ENCODE measurements at regions of chr3 and their contacts with region 1.

Region 1: DNA sequence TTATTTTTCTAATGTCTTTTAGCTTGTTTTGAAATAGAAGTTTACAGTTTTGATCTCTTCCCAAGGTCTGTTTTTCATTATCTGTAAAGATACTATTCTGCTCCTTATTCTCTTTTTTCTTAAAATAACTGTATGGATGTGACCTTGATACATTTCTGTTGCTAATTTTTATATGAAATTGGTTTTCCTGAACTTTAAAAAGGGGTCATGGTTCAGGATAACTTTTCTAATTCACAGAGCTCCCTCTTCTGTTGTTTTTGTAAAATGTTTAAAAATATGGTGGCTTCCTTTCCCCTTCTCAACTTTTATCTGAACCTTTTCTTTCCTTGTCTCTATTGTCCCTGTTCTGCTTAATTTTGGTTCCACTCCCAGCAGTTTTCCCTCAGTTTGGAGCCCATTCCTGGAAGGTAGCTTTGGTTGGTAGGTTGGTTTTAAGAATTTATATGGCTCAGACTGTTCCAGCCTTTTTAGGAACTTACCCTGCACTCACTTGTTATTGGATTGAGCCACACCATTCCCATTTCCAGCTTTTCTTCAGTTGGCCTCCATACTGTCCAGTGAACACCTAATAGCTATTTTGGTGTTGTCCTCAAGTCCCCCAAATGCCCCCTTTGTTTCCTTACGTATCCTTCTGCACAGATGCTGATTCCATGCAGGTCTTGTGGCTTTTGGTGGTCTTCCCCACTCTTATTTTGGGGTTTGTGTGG is 70.3 kb downstream of the SLMAP start:
- DNase-seq: no peak
- ATAC-seq: no peak
- H3K4me3 ChIP-seq: no peak overlapping the region
- H3K27ac ChIP-seq: no peak overlapping the region
- H3K4me1 ChIP-seq: no peaks in the 10 kb centered on the region; the same call in 1 of the 2 replicates
- H3K27me3 ChIP-seq: no peaks in the 10 kb centered on the region
- CTCF ChIP-seq: peak in 1 of 3 experiments; percentile 45; a peak in 2 of 6 replicates
- EP300 ChIP-seq: no peak
- POLR2A ChIP-seq: no peak
- RAD21 ChIP-seq: peak; percentile 63

Region 2: GRCh38 chr3:57169872-57170623 is 656.4 kb before region 1 on chr3:
- CTCF ChIA-PET with region 1: interaction called, 8 read pairs
- POLR2A ChIA-PET with region 1: interaction called, 3 read pairs
- RAD21 ChIA-PET with region 1: no interaction called
- SMC1A ChIA-PET with region 1: interaction called, 11 read pairs
- in situ Hi-C with region 1: no loop called
- intact Hi-C with region 1: no loop called
- DNase-seq: no peak
- ATAC-seq: peak; percentile 91
- H3K4me3 ChIP-seq: peak overlapping the region; percentile 75
- H3K27ac ChIP-seq: no peak overlapping the region; the same call in 1 of the 2 replicates
- H3K4me1 ChIP-seq: 0 out of 2 replicates have a peak, but pooled peaks cover 4% of the 10 kb centered on the region
- H3K27me3 ChIP-seq: peaks cover 0 to 4% of the 10 kb centered on the region in 2 experiments; a peak in 2 of 4 replicates
- CTCF ChIP-seq: peak; percentile 78 to 88 (median 84)
- EP300 ChIP-seq: 0 out of 4 replicates have a peak, but pooled peaks of 1 of the 2 experiments have one; percentile 25
- POLR2A ChIP-seq: no peak
- RAD21 ChIP-seq: peak; percentile 79

Region 3: DNA sequence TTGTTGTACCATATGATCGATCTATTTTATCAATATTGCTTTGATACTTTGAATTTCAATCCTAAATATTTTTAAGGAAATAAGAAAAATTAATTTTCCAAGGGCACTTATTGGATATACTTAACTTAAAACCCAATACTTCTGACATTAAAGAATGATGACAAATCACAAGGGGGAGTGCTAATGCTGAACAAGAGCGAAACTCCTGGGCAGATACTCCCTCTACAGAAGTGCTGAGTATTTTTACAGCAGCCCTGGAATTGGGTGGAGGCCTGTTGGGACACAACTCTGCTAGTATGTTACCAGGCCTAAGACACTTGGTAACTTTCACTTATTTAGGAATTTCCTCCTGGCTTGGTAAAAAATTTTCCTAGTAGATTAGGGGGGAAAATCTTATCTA is 179.7 kb before region 1 on chr3:
- CTCF ChIA-PET with region 1: interaction called, 6 read pairs
- POLR2A ChIA-PET with region 1: no interaction called
- RAD21 ChIA-PET with region 1: no interaction called
- SMC1A ChIA-PET with region 1: interaction called, 7 read pairs
- in situ Hi-C with region 1: no loop called
- intact Hi-C with region 1: loop called (anchors 10 kb)
- DNase-seq: no peak
- ATAC-seq: peak; percentile 41; the same call in 2 of the 3 replicates
- H3K4me3 ChIP-seq: no peak overlapping the region
- H3K27ac ChIP-seq: no peak overlapping the region
- H3K4me1 ChIP-seq: no peaks in the 10 kb centered on the region
- H3K27me3 ChIP-seq: no peaks in the 10 kb centered on the region
- CTCF ChIP-seq: peak in 1 of 3 experiments; percentile 42; a peak in 2 of 6 replicates
- EP300 ChIP-seq: no peak
- POLR2A ChIP-seq: no peak
- RAD21 ChIP-seq: peak; percentile 47

Region 4: DNA sequence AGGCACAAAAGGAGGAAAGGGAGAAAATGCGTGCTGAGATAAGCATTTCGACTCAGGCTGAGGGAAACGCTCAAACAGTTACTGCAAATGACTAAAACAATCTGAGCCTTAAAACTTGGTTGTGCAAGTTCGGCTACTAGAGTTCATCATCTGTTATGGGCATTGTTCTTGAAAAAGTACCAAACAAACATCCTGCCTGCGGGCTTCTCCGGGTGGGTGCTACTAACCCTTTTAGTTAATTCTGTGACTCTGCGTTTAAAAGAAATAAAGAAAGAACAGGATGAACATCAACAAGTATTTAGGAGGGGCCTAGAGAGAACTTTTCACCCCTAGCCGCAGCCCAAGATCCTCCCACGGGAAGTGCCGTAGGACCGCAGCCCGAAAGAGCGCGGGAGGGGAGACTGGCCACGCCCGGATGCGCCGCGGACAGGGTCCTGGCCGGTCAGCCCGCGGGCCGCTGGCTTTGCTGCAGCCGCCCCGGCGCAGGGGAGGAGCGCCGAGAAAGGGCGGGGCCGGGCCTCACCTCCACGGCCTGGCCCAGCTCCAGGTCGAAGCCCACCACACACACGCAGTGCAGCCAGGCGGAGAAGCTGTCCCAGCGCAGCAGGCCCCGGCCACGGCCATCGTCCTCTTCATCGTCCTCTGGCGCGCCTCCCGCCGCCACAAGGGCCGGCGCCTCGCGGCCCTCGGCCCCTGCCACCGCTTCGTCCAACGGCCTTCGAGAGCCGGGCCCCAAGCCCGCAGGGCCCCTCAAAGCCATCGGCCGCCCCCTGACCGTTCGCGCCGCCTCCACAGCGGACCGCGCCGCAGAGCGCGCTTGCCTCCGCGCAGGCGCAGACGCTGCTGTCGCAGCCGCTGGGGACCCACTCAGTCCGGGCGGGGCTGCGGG is 133.9 kb before region 1 on chr3 and contains the start of gene DENND6A:
- CTCF ChIA-PET with region 1: interaction called, 6 read pairs
- POLR2A ChIA-PET with region 1: no interaction called
- RAD21 ChIA-PET with region 1: interaction called, 4 read pairs
- SMC1A ChIA-PET with region 1: interaction called, 18 read pairs
- in situ Hi-C with region 1: no loop called
- intact Hi-C with region 1: no loop called
- DNase-seq: peak; percentile 69
- ATAC-seq: peak; percentile 91
- H3K4me3 ChIP-seq: peak within 1 kb of the TSS; percentile 72
- H3K27ac ChIP-seq: peak within 1 kb of the TSS; percentile 88
- H3K4me1 ChIP-seq: peaks cover 15% of the 10 kb centered on the region; the same call in 1 of the 2 replicates
- H3K27me3 ChIP-seq: no peaks in the 10 kb centered on the region
- CTCF ChIP-seq: no peak
- EP300 ChIP-seq: no peak
- POLR2A ChIP-seq: peak; percentile 92
- RAD21 ChIP-seq: no peak
- polyA plus RNA-seq, gene DENND6A: 1.8 to 3.5 TPM

Region 5: GRCh38 chr3:57770009-57770827 is 56.2 kb before region 1 on chr3:
- CTCF ChIA-PET with region 1: interaction called, 6 read pairs
- POLR2A ChIA-PET with region 1: no interaction called
- RAD21 ChIA-PET with region 1: interaction called, 11 read pairs
- SMC1A ChIA-PET with region 1: interaction called, 8 read pairs
- in situ Hi-C with region 1: no loop called
- intact Hi-C with region 1: no loop called
- DNase-seq: no peak
- ATAC-seq: no peak
- H3K4me3 ChIP-seq: no peak overlapping the region
- H3K27ac ChIP-seq: no peak overlapping the region
- H3K4me1 ChIP-seq: no peaks in the 10 kb centered on the region
- H3K27me3 ChIP-seq: no peaks in the 10 kb centered on the region
- CTCF ChIP-seq: no peak
- EP300 ChIP-seq: no peak
- POLR2A ChIP-seq: no peak
- RAD21 ChIP-seq: no peak

Region 6: GRCh38 chr3:57815036-57815435 is 11.4 kb before region 1 on chr3:
- CTCF ChIA-PET with region 1: interaction called, 27 read pairs
- POLR2A ChIA-PET with region 1: interaction called, 3 read pairs
- RAD21 ChIA-PET with region 1: interaction called, 5 read pairs
- SMC1A ChIA-PET with region 1: interaction called, 6 read pairs
- in situ Hi-C with region 1: no loop called
- intact Hi-C with region 1: no loop called
- DNase-seq: no peak
- ATAC-seq: peak; percentile 56
- H3K4me3 ChIP-seq: no peak overlapping the region
- H3K27ac ChIP-seq: no peak overlapping the region
- H3K4me1 ChIP-seq: no peaks in the 10 kb centered on the region; the same call in 1 of the 2 replicates
- H3K27me3 ChIP-seq: no peaks in the 10 kb centered on the region
- CTCF ChIP-seq: no peak
- EP300 ChIP-seq: no peak
- POLR2A ChIP-seq: no peak
- RAD21 ChIP-seq: no peak

Region 7: DNA sequence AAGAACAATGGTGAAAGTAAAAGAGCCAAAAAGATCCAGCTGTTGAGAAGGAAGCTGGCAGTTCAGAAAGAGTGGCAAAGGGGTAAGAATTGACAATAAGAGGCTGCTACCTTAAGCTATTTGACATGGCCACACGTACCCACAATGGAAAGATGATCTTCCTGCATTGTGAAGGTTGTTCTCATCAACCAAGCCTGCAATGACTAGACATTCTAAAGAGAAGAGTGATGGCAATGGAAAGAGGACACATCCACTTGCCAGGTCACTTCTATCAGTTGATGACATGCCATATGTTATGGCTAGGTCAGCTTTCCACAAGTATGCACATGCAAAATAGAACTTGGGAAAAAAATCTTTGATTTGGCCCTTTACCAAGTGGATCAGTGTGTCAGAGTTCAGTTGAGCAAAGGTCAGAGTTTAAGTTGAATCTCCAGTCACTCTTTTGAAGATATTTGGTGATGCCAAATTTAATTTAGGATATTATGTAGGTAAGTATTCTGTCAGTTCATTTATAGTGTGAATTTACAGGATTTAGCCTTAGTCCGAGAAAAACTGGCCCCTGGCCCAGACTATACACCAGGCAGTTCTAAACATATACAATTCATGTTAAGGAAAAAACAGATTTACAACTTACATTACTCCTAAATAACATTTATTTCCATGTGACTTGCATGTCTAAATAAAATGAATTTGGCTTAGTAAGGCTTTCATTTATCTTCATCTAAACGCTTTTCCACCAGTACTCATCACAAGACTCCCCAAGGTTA is 76.9 kb after region 1 on chr3:
- CTCF ChIA-PET with region 1: no interaction called
- POLR2A ChIA-PET with region 1: no interaction called
- RAD21 ChIA-PET with region 1: no interaction called
- SMC1A ChIA-PET with region 1: no interaction called
- in situ Hi-C with region 1: no loop called
- intact Hi-C with region 1: no loop called
- DNase-seq: no peak
- ATAC-seq: no peak
- H3K4me3 ChIP-seq: no peak overlapping the region
- H3K27ac ChIP-seq: no peak overlapping the region
- H3K4me1 ChIP-seq: no peaks in the 10 kb centered on the region
- H3K27me3 ChIP-seq: no peaks in the 10 kb centered on the region
- CTCF ChIP-seq: no peak
- EP300 ChIP-seq: no peak
- POLR2A ChIP-seq: no peak
- RAD21 ChIP-seq: no peak

Region 8: DNA sequence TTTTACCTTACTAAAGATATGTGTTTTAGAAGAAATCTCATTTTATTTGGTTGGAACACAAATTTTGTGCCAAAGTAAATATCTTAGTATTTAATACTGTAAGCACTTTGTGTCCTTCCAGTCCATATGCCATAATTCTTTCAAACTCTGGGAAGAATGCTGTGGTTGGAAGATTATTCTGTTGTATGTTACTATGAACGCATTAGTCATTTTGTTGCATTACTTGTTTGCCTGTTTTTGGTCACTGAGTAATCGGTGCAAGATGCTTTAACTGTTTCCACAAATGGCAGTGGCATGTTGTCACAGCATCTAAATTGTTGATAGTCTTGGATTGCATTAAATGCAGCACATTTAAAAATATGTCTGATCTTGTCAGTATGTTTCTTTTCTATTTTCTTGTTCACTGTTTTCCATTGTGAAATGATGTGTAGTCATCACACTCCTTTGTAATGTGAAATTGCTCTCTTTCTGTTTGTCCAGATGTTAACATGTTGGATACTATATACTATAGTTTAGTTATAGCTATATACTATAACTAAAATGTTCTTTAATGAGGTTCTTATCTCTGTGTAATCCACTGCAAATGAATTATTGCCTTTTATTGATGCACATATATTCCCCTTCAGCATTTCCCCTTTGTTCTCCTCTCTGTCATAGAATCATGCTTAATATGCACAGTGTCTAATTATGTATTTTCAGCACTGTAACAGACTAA is 91.9 kb after region 1 on chr3:
- CTCF ChIA-PET with region 1: no interaction called
- POLR2A ChIA-PET with region 1: no interaction called
- RAD21 ChIA-PET with region 1: no interaction called
- SMC1A ChIA-PET with region 1: no interaction called
- in situ Hi-C with region 1: no loop called
- intact Hi-C with region 1: no loop called
- DNase-seq: no peak
- ATAC-seq: no peak
- H3K4me3 ChIP-seq: no peak overlapping the region
- H3K27ac ChIP-seq: no peak overlapping the region
- H3K4me1 ChIP-seq: no peaks in the 10 kb centered on the region
- H3K27me3 ChIP-seq: no peaks in the 10 kb centered on the region
- CTCF ChIP-seq: no peak
- EP300 ChIP-seq: no peak
- POLR2A ChIP-seq: no peak
- RAD21 ChIP-seq: no peak

Region 9: DNA sequence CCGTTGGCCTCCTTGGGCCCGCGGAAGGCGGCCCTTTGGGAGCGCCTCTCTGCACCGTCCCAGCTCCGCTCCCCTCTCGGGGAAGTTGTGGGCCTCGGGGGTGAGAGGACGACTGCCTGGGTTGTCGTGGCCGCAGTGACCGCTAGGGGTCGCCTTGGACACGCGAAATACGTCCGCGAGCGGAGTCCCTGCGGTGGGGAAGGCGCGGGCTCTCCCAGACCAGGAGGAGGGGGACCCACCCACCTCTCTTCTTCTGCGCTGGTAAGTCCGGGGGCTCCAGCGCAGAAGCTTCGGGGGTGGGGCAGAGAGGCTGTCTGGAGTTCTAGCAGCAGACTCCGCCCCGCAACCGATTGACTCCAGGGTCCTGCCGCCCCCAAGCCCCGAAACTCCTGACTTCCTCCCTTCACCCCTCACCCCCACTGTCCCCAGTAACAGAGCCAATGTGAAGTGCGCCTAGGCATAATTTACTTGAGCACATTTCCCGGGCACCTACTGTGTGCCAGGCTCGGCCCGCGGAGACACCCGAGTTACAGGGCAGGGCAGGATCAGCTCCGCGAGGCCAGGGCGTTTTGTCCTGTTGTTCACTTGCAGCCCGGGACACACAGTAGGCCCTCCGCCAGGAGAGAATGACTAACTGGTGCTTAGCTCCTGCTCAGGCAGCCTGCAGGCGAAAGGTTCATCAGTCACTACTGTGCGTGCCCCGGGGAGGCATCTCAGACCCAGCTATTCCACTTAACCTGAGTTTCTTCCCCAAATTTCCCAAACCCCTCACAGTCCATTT is 351.5 kb after region 1 on chr3:
- CTCF ChIA-PET with region 1: no interaction called
- POLR2A ChIA-PET with region 1: no interaction called
- RAD21 ChIA-PET with region 1: no interaction called
- SMC1A ChIA-PET with region 1: no interaction called
- in situ Hi-C with region 1: no loop called
- intact Hi-C with region 1: no loop called
- DNase-seq: no peak
- ATAC-seq: peak; percentile 94
- H3K4me3 ChIP-seq: peak overlapping the region; percentile 33; the same call in 1 of the 2 replicates
- H3K27ac ChIP-seq: no peak overlapping the region
- H3K4me1 ChIP-seq: peaks cover 14% of the 10 kb centered on the region
- H3K27me3 ChIP-seq: no peaks in the 10 kb centered on the region
- CTCF ChIP-seq: peak; percentile 81 to 93 (median 88)
- EP300 ChIP-seq: no peak
- POLR2A ChIP-seq: no peak
- RAD21 ChIP-seq: peak; percentile 68

Measured in GM12878 (cell line).